GM12878 (cell line): ENCODE measurements at regions of chr11 and their contacts with region 1.

Region 1: DNA sequence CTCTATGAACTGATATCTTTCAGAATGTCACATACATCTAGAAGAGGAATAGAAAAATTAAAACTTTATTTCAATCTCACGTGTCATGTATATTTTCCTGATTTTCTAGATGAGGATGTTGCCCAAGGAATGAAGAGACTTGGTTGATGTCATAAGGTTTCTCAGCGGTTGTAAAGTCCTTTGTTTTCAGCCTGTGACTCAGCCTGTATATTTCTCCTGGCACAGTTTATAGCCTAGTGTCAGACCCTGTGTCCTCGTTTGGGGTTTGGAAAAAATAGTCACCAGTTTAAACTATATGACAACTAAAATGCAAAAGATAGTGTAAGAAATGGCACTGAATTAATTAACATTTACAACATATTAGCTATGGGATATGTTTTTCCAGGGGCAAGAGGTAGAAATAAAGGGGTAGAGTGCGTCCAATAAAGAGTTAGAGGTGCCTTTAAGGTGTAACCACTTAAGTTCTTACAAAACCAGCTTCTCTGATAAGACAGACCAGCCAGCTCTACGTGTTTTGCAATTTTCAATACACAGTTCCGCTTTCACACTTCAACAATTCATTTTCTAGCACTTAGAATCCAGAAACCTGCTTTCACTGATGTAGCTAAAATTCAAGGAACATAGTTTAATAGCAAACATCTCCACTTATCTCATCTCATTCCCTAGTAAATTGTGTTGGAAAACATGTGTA is 1432.6 kb upstream of the TENM4 start:
- DNase-seq: peak; percentile 7
- ATAC-seq: peak; percentile 94
- H3K4me3 ChIP-seq: no peak overlapping the region
- H3K27ac ChIP-seq: no peak overlapping the region
- H3K4me1 ChIP-seq: no peaks in the 10 kb centered on the region; the same call in 1 of the 2 replicates
- H3K27me3 ChIP-seq: no peaks in the 10 kb centered on the region; a peak in 1 of 4 replicates
- CTCF ChIP-seq: no peak
- EP300 ChIP-seq: no peak
- POLR2A ChIP-seq: no peak
- RAD21 ChIP-seq: no peak

Region 2: GRCh38 chr11:80860632-80861031 is 12.8 kb before region 1 on chr11:
- CTCF ChIA-PET with region 1: interaction called, 3 read pairs
- POLR2A ChIA-PET with region 1: no interaction called
- RAD21 ChIA-PET with region 1: no interaction called
- SMC1A ChIA-PET with region 1: interaction called, 17 read pairs
- in situ Hi-C with region 1: no loop called
- intact Hi-C with region 1: no loop called
- DNase-seq: no peak
- ATAC-seq: peak; percentile 44; the same call in 2 of the 3 replicates
- H3K4me3 ChIP-seq: no peak overlapping the region
- H3K27ac ChIP-seq: no peak overlapping the region
- H3K4me1 ChIP-seq: no peaks in the 10 kb centered on the region
- H3K27me3 ChIP-seq: no peaks in the 10 kb centered on the region; a peak in 1 of 4 replicates
- CTCF ChIP-seq: no peak
- EP300 ChIP-seq: no peak
- POLR2A ChIP-seq: no peak
- RAD21 ChIP-seq: no peak

Region 3: GRCh38 chr11:80886684-80887083 is 13.2 kb after region 1 on chr11:
- CTCF ChIA-PET with region 1: interaction called, 5 read pairs
- POLR2A ChIA-PET with region 1: interaction called, 6 read pairs
- RAD21 ChIA-PET with region 1: no interaction called
- SMC1A ChIA-PET with region 1: interaction called, 14 read pairs
- in situ Hi-C with region 1: no loop called
- intact Hi-C with region 1: no loop called
- DNase-seq: no peak
- ATAC-seq: no peak
- H3K4me3 ChIP-seq: no peak overlapping the region
- H3K27ac ChIP-seq: no peak overlapping the region
- H3K4me1 ChIP-seq: no peaks in the 10 kb centered on the region
- H3K27me3 ChIP-seq: no peaks in the 10 kb centered on the region
- CTCF ChIP-seq: no peak
- EP300 ChIP-seq: no peak
- POLR2A ChIP-seq: no peak
- RAD21 ChIP-seq: no peak